Activated CD4-positive, alpha-beta memory T cell treated with anti-CD3 and anti-CD28 coated beads, Interleukin-2, amount 10 ng/mL, durations not matched to agents 7 days and 5 days (primary cell): ENCODE measurements at regions of chr6 and their contacts with region 1.

Region 1: DNA sequence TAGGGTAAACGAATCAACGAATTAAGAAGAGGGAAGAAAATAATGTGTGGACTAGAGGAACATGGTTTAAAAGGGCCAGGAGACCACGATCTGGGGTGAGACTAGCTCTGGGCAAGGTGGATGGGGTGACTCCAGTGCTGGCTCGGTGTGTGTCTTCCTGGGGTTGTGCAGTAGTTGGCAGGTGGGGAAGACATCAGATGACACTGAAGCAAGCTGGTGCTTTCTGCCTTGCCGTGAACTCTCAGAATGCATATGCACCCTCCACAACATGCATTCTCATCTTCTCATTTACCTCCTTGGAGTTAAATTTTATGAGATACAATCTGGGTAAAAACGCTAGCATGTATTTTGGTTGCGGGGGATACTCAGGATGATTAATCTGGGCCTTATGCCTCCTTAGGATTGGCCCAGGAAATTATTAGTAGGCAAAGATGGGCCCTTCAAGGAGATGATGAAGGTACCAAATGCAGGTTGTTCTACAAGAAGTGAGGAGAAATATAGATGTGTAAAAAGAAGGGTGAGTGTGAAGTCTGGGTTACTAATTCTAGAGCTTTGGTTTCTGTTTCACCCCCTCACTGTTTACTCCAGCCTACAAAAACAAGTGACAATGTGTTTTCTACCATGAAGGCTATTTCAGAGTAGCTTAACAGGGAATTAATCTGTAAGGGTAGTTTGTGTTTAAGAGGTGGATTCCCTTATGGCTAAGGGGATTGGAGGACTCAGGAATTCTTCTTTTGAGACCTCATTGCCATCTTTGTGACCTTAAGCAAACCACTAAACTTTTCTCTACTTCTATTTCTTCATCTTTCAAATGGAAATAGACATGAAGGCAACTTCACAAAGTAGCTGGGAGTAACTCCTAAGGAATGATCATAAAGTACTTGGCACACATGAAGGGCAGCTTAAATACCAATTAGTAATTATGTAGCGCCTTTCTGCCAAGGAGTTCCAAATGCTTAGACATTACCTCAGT is 71.0 kb upstream of the SUPT3H start:
- DNase-seq: no peak
- H3K4me3 Mint-ChIP-seq: peak overlapping the region; percentile 18
- H3K27ac Mint-ChIP-seq: peak overlapping the region; percentile 36
- H3K4me1 Mint-ChIP-seq: peaks cover 94% of the 10 kb centered on the region
- H3K27me3 Mint-ChIP-seq: no peaks in the 10 kb centered on the region

Region 2: DNA sequence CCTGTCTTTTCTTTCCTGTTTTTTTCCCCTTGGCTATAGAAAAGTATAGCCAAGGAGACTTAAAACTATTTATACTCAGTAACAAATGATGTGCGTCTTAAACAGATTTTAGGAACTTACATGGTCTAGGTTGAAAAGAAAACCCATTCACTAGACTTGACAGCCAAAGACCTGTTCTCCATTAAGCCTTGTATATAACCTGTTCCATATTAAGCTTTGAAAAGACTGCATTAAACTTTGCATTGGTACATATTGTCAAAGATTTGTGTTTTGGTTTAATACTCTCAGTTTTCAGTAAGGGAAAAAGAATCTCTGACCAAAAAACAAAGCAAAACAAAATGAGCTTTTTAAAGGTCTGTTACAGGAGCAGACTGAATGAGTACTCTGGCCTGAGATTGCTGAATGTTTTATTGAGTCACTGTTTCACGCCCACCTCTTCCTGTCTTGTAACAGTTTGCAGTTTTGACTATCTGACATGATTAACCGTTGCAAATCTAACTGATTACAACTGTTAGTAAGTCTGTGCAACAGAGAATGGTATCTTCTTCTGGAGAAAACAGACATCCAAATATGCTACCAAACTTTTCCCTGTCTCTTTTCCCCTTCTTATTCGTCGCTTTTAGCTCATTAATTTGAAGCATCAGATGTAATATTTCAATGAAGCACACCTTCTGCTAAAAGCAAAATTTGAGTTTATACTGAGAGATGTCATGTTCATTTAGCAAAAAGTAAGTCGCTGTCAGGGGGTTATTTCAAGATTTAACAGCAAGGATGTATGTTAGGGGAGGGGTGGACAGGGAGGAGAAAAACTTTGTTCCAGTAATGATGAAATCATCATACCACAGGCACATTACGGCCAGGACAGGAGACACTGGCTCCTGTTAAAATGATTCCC is 11.9 kb before region 1 on chr6:
- CTCF ChIA-PET with region 1: interaction called, 3 read pairs
- POLR2A ChIA-PET with region 1: interaction called, 10 read pairs
- DNase-seq: peak; percentile 44
- H3K4me3 Mint-ChIP-seq: peak overlapping the region; percentile 65
- H3K27ac Mint-ChIP-seq: peak overlapping the region; percentile 89
- H3K4me1 Mint-ChIP-seq: peaks cover 86% of the 10 kb centered on the region
- H3K27me3 Mint-ChIP-seq: no peaks in the 10 kb centered on the region

Region 3: GRCh38 chr6:45843848-45844521 is 395.3 kb after region 1 on chr6:
- CTCF ChIA-PET with region 1: no interaction called
- POLR2A ChIA-PET with region 1: no interaction called
- DNase-seq: no peak
- H3K4me3 Mint-ChIP-seq: no peak overlapping the region
- H3K27ac Mint-ChIP-seq: no peak overlapping the region
- H3K4me1 Mint-ChIP-seq: peaks cover 1% of the 10 kb centered on the region
- H3K27me3 Mint-ChIP-seq: no peaks in the 10 kb centered on the region